ENCODE measurements at regions of chr7 and their contacts with region 1.

Region 1: DNA sequence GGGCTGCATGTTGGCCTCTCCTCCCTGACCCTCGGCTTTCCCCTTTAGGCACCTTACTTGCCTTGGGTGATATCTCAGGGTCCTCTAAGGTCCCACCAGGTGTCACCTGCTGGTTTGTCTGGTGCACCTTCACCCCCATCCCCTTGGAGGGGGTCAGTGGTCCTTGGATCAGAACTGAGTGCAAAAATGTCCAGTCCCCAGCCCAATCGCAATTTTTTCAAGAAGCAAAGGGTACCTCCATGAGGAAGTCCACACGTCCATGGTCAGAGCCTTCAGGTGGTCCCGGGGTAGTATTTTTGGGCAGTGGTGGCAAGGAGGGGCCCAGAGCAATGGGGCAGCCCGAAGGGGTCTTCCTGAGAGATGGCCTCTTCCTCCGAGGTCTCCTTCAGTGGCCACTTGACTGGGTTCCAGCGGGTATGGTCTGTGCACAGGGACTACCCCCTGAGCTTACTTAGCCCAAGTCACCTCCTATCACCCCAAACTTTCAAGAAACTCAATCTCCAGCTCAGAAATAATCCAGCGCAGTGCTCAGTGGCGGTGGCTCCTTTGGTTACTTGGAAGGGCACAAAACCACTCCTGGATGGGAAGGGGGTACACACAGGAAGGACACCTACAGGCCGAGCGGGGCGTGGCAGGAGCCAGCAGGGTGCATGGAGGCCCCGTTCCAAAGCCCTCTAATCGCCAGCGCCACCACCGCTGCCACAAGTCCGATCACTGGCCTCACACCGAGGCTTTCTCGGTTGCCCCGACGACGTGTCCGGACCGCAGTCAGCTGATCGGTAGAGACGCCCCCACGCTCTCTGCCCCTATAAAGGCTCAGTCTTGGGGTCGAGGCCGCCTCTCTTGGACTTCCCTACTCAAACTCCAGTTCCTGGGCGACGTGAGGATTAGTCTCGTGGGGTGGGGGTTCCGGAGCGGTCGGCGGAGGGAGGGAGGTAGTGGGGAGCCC is 4.5 kb downstream of the SAP25 start:
- DNase-seq: peak in 3 of 4 donors; percentile 61 to 84 (median 62)
- ATAC-seq: peak; percentile 62
- H3K4me3 ChIP-seq: peak overlapping the region; percentile 10 to 16
- H3K27ac ChIP-seq: no peak overlapping the region
- H3K4me1 ChIP-seq: peaks cover 12 to 34% of the 10 kb centered on the region in 2 donors
- H3K27me3 ChIP-seq: peaks cover 0 to 15% of the 10 kb centered on the region in 2 donors
- CTCF ChIP-seq: peak; percentile 15 to 41

Region 2: GRCh38 chr7:100137851-100138760 is 431.1 kb before region 1 on chr7:
- intact Hi-C with region 1: no loop called
- DNase-seq: no peak
- ATAC-seq: no peak
- H3K4me3 ChIP-seq: no peak overlapping the region
- H3K27ac ChIP-seq: no peak overlapping the region
- H3K4me1 ChIP-seq: peaks cover 0 to 15% of the 10 kb centered on the region in 2 donors
- H3K27me3 ChIP-seq: no peaks in the 10 kb centered on the region
- CTCF ChIP-seq: no peak

Region 3: GRCh38 chr7:100599911-100600729 is 30.9 kb after region 1 on chr7:
- intact Hi-C with region 1: loop called in 1 of 2 experiments (anchors 2 kb)
- DNase-seq: no peak
- ATAC-seq: no peak
- H3K4me3 ChIP-seq: no peak overlapping the region
- H3K27ac ChIP-seq: no peak overlapping the region
- H3K4me1 ChIP-seq: peaks cover 0 to 17% of the 10 kb centered on the region in 2 donors
- H3K27me3 ChIP-seq: peaks cover 0 to 8% of the 10 kb centered on the region in 2 donors
- CTCF ChIP-seq: no peak

Region 4: GRCh38 chr7:100691676-100692577 is 122.8 kb after region 1 on chr7:
- intact Hi-C with region 1: loop called in 1 of 2 experiments (anchors 5 kb)
- DNase-seq: peak; percentile 69 to 94 (median 76)
- ATAC-seq: peak; percentile 86
- H3K4me3 ChIP-seq: peak overlapping the region in 1 of 2 donors; percentile 93
- H3K27ac ChIP-seq: peak overlapping the region in 1 of 2 donors; percentile 8
- H3K4me1 ChIP-seq: peaks cover 24 to 35% of the 10 kb centered on the region in 2 donors
- H3K27me3 ChIP-seq: no peaks in the 10 kb centered on the region
- CTCF ChIP-seq: peak; percentile 83 to 96